Activated CD8-positive, alpha-beta T cell treated with anti-CD3 and anti-CD28 coated beads, Interleukin-2, amount 10 ng/mL, durations not matched to agents 7 days and 5 days (primary cell): ENCODE measurements at regions of chr11 and their contacts with region 1.

Region 1: DNA sequence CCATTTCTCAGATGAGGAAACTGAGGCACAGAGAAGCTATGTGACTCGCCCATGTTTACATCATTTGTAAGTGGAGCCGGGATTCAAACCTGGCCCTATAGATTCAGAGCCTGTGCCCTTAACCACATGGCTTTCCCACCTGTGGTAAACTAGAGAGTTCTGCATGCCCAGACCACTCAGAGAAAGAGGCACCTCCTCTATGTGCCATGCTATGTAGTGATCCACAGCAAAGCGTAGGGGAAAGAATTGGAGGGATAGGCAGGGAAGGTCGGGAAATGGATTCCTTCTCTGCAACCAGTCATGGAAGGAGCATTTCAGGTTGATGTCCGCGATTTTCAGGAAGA is 15.4 kb upstream of the POU2AF2 start:
- DNase-seq: no peak
- ATAC-seq: peak; percentile 78
- H3K4me3 Mint-ChIP-seq: peak overlapping the region; percentile 66
- H3K27ac Mint-ChIP-seq: no peak overlapping the region
- H3K4me1 Mint-ChIP-seq: peaks cover 25% of the 10 kb centered on the region
- H3K27me3 Mint-ChIP-seq: peaks cover 26% of the 10 kb centered on the region

Region 2: GRCh38 chr11:111157571-111157970 is 72.5 kb before region 1 on chr11:
- CTCF ChIA-PET with region 1: interaction called, 3 read pairs
- POLR2A ChIA-PET with region 1: interaction called, 10 read pairs
- DNase-seq: no peak
- ATAC-seq: no peak
- H3K4me3 Mint-ChIP-seq: no peak overlapping the region
- H3K27ac Mint-ChIP-seq: no peak overlapping the region
- H3K4me1 Mint-ChIP-seq: no peaks in the 10 kb centered on the region
- H3K27me3 Mint-ChIP-seq: peaks cover 8% of the 10 kb centered on the region

Region 3: GRCh38 chr11:111194860-111195568 is 35.1 kb before region 1 on chr11:
- CTCF ChIA-PET with region 1: no interaction called
- POLR2A ChIA-PET with region 1: no interaction called
- DNase-seq: no peak
- ATAC-seq: no peak
- H3K4me3 Mint-ChIP-seq: no peak overlapping the region
- H3K27ac Mint-ChIP-seq: no peak overlapping the region
- H3K4me1 Mint-ChIP-seq: no peaks in the 10 kb centered on the region
- H3K27me3 Mint-ChIP-seq: peaks cover 19% of the 10 kb centered on the region

Region 4: GRCh38 chr11:111213256-111213655 is 16.8 kb before region 1 on chr11:
- CTCF ChIA-PET with region 1: interaction called, 13 read pairs
- POLR2A ChIA-PET with region 1: no interaction called
- DNase-seq: no peak
- ATAC-seq: no peak
- H3K4me3 Mint-ChIP-seq: no peak overlapping the region
- H3K27ac Mint-ChIP-seq: no peak overlapping the region
- H3K4me1 Mint-ChIP-seq: no peaks in the 10 kb centered on the region
- H3K27me3 Mint-ChIP-seq: peaks cover 33% of the 10 kb centered on the region

Region 5: GRCh38 chr11:111446404-111447111 is 216.5 kb after region 1 on chr11:
- CTCF ChIA-PET with region 1: interaction called, 10 read pairs
- POLR2A ChIA-PET with region 1: no interaction called
- DNase-seq: peak; percentile 89
- ATAC-seq: peak; percentile 99
- H3K4me3 Mint-ChIP-seq: no peak overlapping the region
- H3K27ac Mint-ChIP-seq: peak overlapping the region; percentile 48
- H3K4me1 Mint-ChIP-seq: peaks cover 17% of the 10 kb centered on the region
- H3K27me3 Mint-ChIP-seq: peaks cover 4% of the 10 kb centered on the region